Sciatic nerve (tissue), 2 donors: ENCODE measurements at regions of chr3 and their contacts with region 1.

Region 1: DNA sequence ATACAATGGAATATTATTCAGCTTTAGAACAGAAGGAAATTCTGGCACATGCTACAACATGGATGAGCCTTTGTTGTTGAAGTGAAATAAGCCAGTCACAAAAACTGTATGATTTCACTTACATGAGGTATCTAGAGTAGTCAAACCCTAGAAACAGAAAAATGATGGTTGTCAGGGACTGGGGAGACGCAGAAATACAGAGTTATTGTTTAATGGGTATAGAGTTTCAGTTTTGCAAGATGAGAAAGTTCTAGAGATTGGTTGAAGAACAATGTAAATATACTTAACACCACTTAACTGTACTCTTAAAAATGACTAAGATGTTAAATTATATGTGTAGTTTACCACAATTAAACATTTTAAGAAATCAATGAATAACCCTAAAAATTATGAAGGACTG is 15.8 kb downstream of the SPTSSB start:
- DNase-seq: no peak
- ATAC-seq: no peak

Region 2: DNA sequence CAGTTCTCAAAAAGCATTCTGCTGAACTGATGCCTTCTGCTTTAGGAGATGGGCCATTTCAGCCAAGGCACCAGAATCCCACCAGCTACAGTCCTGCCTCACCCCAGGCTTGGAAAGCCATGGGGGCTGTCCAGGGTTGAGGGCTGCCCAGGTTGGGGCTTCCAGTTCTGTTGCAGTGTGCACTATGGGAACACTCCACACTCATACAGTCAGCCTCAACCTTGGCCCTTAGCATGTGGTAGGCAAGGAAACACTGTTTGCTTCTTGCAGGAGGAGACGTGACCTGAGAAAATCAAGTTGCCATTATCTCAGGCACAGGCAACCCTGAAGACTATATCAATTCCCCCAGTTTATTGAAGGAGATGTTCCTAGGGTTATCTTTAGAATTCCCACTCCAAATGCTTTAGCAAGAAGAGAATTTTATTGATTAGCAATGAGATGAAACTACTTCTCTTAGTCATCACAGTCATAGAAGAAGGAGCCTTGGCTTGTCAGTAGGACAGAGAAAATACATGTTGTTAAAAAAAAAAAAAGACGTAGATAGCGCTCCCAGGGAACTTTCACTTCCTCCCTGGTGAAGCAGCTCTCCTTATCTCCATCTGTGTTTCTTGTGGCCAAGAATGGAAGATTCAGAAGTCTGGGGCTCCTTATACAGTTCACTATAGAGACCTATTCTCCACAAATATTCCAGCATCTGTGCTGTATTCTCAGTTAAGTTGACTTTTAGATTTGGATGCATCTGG is 1405.2 kb before region 1 on chr3:
- intact Hi-C with region 1: loop called (anchors 5 kb)
- DNase-seq: no peak
- ATAC-seq: no peak

Region 3: GRCh38 chr3:161700998-161701397 is 345.5 kb after region 1 on chr3:
- intact Hi-C with region 1: no loop called
- DNase-seq: no peak
- ATAC-seq: peak; percentile 39

Region 4: GRCh38 chr3:162507397-162507796 is 1151.9 kb after region 1 on chr3:
- intact Hi-C with region 1: no loop called
- DNase-seq: no peak
- ATAC-seq: no peak